ENCODE measurements at regions of chr10 and their contacts with region 1.

Region 1: GRCh38 chr10:115171392-115171960 is 78.3 kb downstream of the ATRNL1 start:
- DNase-seq: no peak
- H3K4me3 ChIP-seq: no peak overlapping the region
- H3K27ac ChIP-seq: no peak overlapping the region
- H3K27me3 ChIP-seq: no peaks in the 10 kb centered on the region
- CTCF ChIP-seq: peak; percentile 48

Region 2: GRCh38 chr10:115417585-115418265 is 246.2 kb after region 1 on chr10:
- CTCF ChIA-PET with region 1: interaction called, 25 read pairs
- POLR2A ChIA-PET with region 1: no interaction called
- DNase-seq: peak; percentile 6
- H3K4me3 ChIP-seq: no peak overlapping the region
- H3K27ac ChIP-seq: no peak overlapping the region
- H3K27me3 ChIP-seq: no peaks in the 10 kb centered on the region
- CTCF ChIP-seq: peak; percentile 78

Measured in AG04450 (cell line).